CD4-positive, alpha-beta memory T cell (primary cell): ENCODE measurements at regions of chr21 and their contacts with region 1.

Region 1: DNA sequence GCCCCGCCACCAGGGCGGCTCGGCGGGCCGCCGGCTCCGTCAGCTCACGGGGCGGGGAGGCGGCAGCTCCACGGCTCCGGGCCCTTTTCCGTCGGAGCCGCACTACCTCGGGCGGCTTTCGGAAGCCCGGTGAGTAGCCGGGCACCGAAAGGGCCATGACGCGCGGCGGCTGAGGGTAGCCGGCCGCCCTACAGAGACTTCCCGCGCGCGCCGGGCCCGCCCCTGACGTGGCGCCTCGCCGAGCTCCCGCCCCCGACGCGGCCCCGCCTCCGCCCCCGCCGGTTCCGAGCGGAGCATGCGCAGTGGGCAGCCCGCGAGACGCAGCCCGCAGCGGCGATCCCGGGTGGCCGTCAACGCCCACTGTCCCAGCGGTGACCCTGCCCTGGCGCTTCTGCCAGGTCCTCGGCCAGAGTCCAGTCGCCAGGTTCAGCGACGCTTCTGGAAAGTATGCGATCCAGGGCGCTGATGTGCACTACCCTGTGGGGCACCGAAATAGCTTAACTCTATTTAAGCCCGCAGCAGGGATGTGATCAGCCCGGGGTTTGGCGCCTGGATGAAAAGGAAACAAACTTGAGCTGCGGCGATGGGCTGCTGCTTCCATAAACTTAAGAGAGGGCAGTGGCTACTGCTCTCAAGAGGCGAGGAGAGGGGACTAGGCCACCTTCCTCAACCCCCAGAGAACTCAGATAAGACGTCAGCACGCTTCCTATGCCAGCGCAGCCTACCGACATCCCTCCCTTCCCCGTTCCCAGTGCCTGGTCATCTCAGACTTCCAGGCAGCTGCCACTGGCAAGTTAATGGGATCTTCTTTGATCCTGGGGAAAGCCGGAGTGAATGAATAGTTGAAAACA is at the start of gene DONSON:
- DNase-seq: peak; percentile 82 to 92 (median 89)
- H3K4me3 ChIP-seq: peak within 1 kb of the TSS; percentile 60 to 72
- H3K4me3 Mint-ChIP-seq: peak within 1 kb of the TSS; percentile 92 to 98 (median 94)
- H3K27ac ChIP-seq: peak within 1 kb of the TSS; percentile 78
- H3K27ac Mint-ChIP-seq: peak within 1 kb of the TSS; percentile 76 to 96 (median 95)
- H3K4me1 ChIP-seq: peaks cover 14% of the 10 kb centered on the region
- H3K4me1 Mint-ChIP-seq: peaks cover 5 to 18% (median 10%) of the 10 kb centered on the region in 4 donors
- H3K27me3 ChIP-seq: no peaks in the 10 kb centered on the region
- H3K27me3 Mint-ChIP-seq: no peaks in the 10 kb centered on the region
- total RNA-seq, gene DONSON: 11.0 to 13.7 TPM

Region 2: GRCh38 chr21:33479679-33480480 is 108.8 kb before region 1 on chr21 and contains the start of gene TMEM50B:
- CTCF ChIA-PET with region 1: no interaction called
- POLR2A ChIA-PET with region 1: interaction called, 22 read pairs
- intact Hi-C with region 1: no loop called
- DNase-seq: peak; percentile 91 to 95 (median 94)
- H3K4me3 ChIP-seq: peak within 1 kb of the TSS; percentile 71 to 95
- H3K4me3 Mint-ChIP-seq: peak within 1 kb of the TSS; percentile 92 to 96 (median 94)
- H3K27ac ChIP-seq: peak within 1 kb of the TSS; percentile 91
- H3K27ac Mint-ChIP-seq: peak within 1 kb of the TSS; percentile 87 to 97 (median 95)
- H3K4me1 ChIP-seq: peaks cover 14% of the 10 kb centered on the region
- H3K4me1 Mint-ChIP-seq: peaks cover 8 to 29% (median 19%) of the 10 kb centered on the region in 4 donors
- H3K27me3 ChIP-seq: no peaks in the 10 kb centered on the region
- H3K27me3 Mint-ChIP-seq: no peaks in the 10 kb centered on the region
- total RNA-seq, gene TMEM50B: 110 to 112 TPM

Region 3: DNA sequence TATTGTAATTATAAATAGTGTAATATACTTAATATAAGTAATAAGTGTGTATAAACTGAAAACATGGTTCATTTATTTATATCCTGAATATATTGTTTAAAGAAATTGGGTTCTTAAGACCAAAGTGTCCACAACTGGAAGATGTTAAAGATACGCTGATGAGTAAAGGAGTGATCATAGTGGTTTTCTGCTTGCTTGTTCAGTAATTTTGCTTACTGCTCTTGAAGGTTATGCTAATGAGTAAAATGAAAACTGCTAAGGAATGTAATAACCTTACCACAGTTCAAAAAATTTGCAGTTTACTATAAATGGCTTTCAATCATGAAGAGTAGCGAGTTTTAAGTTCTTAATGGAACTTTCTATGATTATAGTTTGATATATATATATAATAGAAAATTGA is 22.2 kb before region 1 on chr21:
- CTCF ChIA-PET with region 1: interaction called, 4 read pairs
- POLR2A ChIA-PET with region 1: interaction called, 12 read pairs
- intact Hi-C with region 1: no loop called
- DNase-seq: no peak
- H3K4me3 ChIP-seq: no peak overlapping the region
- H3K4me3 Mint-ChIP-seq: no peak overlapping the region
- H3K27ac ChIP-seq: no peak overlapping the region
- H3K27ac Mint-ChIP-seq: peak overlapping the region in 1 of 7 donors; percentile 27
- H3K4me1 ChIP-seq: peaks cover 36% of the 10 kb centered on the region
- H3K4me1 Mint-ChIP-seq: peaks cover 21 to 55% (median 31%) of the 10 kb centered on the region in 4 donors
- H3K27me3 ChIP-seq: no peaks in the 10 kb centered on the region
- H3K27me3 Mint-ChIP-seq: no peaks in the 10 kb centered on the region

Region 4: GRCh38 chr21:33572350-33572749 is 16.4 kb before region 1 on chr21:
- CTCF ChIA-PET with region 1: interaction called, 7 read pairs
- POLR2A ChIA-PET with region 1: interaction called, 5 read pairs
- intact Hi-C with region 1: loop called (anchors 2 kb)
- DNase-seq: no peak
- H3K4me3 ChIP-seq: no peak overlapping the region
- H3K4me3 Mint-ChIP-seq: no peak overlapping the region
- H3K27ac ChIP-seq: no peak overlapping the region
- H3K27ac Mint-ChIP-seq: peak overlapping the region in 6 of 7 donors; percentile 5 to 78 (median 47)
- H3K4me1 ChIP-seq: peaks cover 10% of the 10 kb centered on the region
- H3K4me1 Mint-ChIP-seq: peaks cover 8 to 25% (median 15%) of the 10 kb centered on the region in 4 donors
- H3K27me3 ChIP-seq: no peaks in the 10 kb centered on the region
- H3K27me3 Mint-ChIP-seq: no peaks in the 10 kb centered on the region

Region 5: DNA sequence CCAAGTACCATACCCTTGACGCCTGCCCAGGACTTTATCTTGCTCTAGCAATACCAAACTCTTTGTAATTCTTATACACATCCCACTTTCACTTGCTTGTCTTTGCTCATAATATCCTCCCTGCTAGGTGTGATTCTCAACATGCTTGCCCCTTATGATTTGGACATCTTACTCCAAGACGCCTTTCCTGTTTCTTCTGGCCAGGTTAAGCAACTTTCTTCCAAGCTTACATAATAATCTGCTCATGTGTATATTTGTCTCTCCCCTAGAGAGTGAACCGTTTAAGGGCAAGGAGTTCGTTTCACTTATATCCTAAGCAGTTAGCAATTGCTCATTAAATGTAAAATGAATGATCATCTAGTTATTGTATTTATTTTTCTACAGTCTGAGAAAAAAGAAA is 31.0 kb after region 1 on chr21:
- CTCF ChIA-PET with region 1: no interaction called
- POLR2A ChIA-PET with region 1: no interaction called
- intact Hi-C with region 1: no loop called
- DNase-seq: no peak
- H3K4me3 ChIP-seq: no peak overlapping the region
- H3K4me3 Mint-ChIP-seq: no peak overlapping the region
- H3K27ac ChIP-seq: no peak overlapping the region
- H3K27ac Mint-ChIP-seq: peak overlapping the region in 1 of 7 donors; percentile 55
- H3K4me1 ChIP-seq: no peaks in the 10 kb centered on the region
- H3K4me1 Mint-ChIP-seq: no peaks in the 10 kb centered on the region
- H3K27me3 ChIP-seq: no peaks in the 10 kb centered on the region
- H3K27me3 Mint-ChIP-seq: no peaks in the 10 kb centered on the region